Sigmoid colon (tissue), 7 donors: ENCODE measurements at regions of chr19 and their contacts with region 1.

Region 1: GRCh38 chr19:12681074-12681951 is at the start of gene DHPS:
- DNase-seq: peak; percentile 97
- H3K4me3 ChIP-seq: peak within 1 kb of the TSS; percentile 96 to 99 (median 98)
- H3K27ac ChIP-seq: peak within 1 kb of the TSS; percentile 97 to 100 (median 100)
- H3K4me1 ChIP-seq: peaks cover 0 to 24% (median 16%) of the 10 kb centered on the region in 4 donors
- H3K27me3 ChIP-seq: no peaks in the 10 kb centered on the region
- CTCF ChIP-seq: no peak
- EP300 ChIP-seq: peak in 1 of 4 donors; percentile 70
- POLR2A ChIP-seq: peak; percentile 8 to 39
- total RNA-seq, gene DHPS: 105 to 160 (median 136) TPM

Region 2: DNA sequence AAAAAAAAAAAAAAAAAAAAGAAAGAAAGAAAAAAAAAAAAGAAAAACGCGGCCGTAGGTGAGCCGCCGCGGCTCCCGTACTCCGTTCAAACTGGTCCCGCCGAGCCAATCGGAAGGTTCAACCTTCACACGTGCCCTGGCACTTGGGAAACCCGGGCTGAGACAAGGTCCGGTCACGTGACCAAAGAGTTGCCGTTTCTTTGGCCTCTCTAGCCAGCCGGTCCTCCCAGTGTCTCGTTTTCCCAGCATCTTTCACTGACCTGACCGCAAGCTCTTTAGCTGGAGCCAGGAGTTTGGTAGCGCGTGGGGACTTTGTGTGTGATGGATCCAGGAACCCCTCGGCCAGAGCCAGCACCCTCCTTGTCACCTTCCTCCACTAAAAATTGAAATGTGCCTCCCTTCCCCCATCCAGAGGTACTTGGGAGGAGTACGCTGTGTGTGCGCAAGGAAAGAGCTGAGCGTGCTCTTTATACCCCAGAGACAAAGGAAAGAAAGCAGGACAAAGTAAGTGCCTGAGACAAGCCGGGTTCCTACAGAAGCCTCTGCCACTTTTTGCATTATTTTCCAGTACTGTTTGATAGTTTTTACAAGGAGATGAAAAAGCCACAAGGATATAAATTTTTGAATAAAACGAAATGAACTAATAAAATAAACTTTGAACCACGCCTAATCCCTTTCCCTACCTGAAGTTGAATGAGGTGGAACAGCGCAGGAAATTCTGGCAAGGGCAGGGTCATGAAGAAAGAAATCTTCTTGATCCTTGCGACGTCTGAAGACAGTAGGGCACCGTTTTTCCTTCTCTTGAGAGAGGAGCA is 41.5 kb after region 1 on chr19:
- intact Hi-C with region 1: loop called (anchors 2 kb)
- DNase-seq: peak; percentile 99
- H3K4me3 ChIP-seq: peak overlapping the region; percentile 54 to 98 (median 77)
- H3K27ac ChIP-seq: peak overlapping the region; percentile 93 to 98 (median 95)
- H3K4me1 ChIP-seq: peaks cover 0 to 49% (median 44%) of the 10 kb centered on the region in 4 donors
- H3K27me3 ChIP-seq: no peaks in the 10 kb centered on the region
- CTCF ChIP-seq: no peak
- EP300 ChIP-seq: peak in 1 of 4 donors; percentile 13
- POLR2A ChIP-seq: peak in 1 of 2 donors; percentile 39

Region 3: DNA sequence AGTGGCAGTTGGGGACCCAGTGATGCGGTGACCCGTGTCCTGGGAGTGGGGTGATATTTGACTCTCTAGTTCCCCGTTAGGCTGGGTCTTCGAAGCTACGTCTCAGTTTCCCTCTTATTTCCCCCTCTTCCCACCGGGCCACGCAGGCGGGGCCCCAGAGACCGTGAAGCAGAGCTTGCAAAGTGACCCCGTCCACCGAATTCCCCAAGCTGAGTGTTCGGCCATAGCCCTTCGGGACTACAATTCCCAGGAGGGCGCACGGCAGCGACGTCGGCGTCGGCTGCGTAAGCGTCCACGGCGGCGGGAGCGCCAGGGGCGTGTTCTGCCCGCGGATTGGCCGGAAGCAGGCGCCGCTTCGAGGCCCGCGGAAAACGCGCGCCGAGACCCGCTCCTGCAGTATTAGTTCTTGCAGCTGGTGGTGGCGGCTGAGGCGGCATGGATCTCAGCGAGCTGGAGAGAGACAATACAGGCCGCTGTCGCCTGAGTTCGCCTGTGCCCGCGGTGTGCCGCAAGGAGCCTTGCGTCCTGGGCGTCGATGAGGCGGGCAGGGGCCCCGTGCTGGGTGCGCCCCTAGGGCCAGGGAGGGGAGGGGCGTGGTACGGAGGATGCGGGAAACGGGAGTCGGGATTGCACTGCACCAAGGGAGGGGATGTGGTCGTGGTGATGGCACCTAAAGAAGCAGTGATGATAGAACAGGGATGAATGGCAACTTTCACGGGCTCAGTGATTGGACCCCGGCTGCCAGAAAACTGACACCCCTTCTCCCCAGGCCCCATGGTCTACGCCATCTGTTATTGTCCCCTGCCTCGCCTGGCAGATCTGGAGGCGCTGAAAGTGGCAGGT is 125.1 kb after region 1 on chr19 and contains the start of gene RNASEH2A:
- intact Hi-C with region 1: no loop called
- DNase-seq: peak; percentile 94
- H3K4me3 ChIP-seq: peak within 1 kb of the TSS; percentile 30 to 62 (median 50)
- H3K27ac ChIP-seq: peak within 1 kb of the TSS; percentile 57 to 75 (median 74)
- H3K4me1 ChIP-seq: peaks cover 0 to 24% (median 17%) of the 10 kb centered on the region in 4 donors
- H3K27me3 ChIP-seq: no peaks in the 10 kb centered on the region
- CTCF ChIP-seq: peak in 2 of 4 experiments; percentile 22 to 29
- EP300 ChIP-seq: no peak
- POLR2A ChIP-seq: no peak
- total RNA-seq, gene RNASEH2A: 1.9 to 3.7 (median 3.0) TPM